ENCODE measurements at regions of chr16 and their contacts with region 1.

Region 1: GRCh38 chr16:80824718-80825364 is 20.4 kb upstream of the CDYL2 start:
- DNase-seq: peak; percentile 57
- ATAC-seq: no peak
- H3K4me3 Mint-ChIP-seq: no peak overlapping the region
- H3K27ac Mint-ChIP-seq: no peak overlapping the region
- H3K4me1 Mint-ChIP-seq: no peaks in the 10 kb centered on the region
- H3K27me3 Mint-ChIP-seq: peaks cover 12% of the 10 kb centered on the region

Region 2: GRCh38 chr16:80691111-80691741 is 133.6 kb before region 1 on chr16:
- CTCF ChIA-PET with region 1: no interaction called
- POLR2A ChIA-PET with region 1: no interaction called
- intact Hi-C with region 1: loop called in 1 of 2 experiments (anchors 10 kb)
- DNase-seq: no peak
- ATAC-seq: no peak
- H3K4me3 Mint-ChIP-seq: no peak overlapping the region
- H3K27ac Mint-ChIP-seq: no peak overlapping the region
- H3K4me1 Mint-ChIP-seq: peaks cover 35% of the 10 kb centered on the region
- H3K27me3 Mint-ChIP-seq: no peaks in the 10 kb centered on the region